ENCODE measurements at regions of chr3 and their contacts with region 1.

Region 1: DNA sequence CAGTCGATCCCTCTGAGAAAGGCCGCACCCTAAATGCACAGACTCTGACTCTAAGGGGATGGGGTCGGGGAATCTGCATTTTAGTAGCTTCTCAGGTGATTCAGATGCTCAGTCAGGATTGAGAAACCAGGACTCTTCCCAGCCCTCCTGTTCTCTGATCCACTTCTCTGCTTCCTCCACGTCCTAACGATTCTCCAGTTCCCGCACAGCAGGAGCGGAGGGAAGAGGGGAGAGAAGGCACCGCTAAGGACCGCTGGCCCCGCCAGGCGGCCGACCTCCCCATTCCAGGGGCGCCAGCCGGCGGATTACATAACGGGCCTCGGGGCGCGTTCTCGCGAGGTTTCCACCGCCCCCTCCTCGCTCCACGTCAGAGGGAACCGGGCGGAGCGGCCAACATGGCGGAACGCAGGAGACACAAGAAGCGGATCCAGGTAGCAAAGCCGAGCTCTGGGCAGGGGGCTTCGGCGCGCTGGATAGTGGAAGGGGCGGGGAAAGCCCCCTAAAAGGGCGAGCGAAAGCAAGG is at the start of gene SEC62:
- DNase-seq: peak; percentile 97
- ATAC-seq: peak; percentile 88
- H3K4me3 ChIP-seq: peak within 1 kb of the TSS; percentile 59 to 88 (median 85)
- H3K4me3 Mint-ChIP-seq: peak within 1 kb of the TSS; percentile 90
- H3K27ac ChIP-seq: peak within 1 kb of the TSS; percentile 98 to 99
- H3K27ac Mint-ChIP-seq: peak within 1 kb of the TSS; percentile 95
- H3K4me1 ChIP-seq: peaks cover 45 to 74% of the 10 kb centered on the region in 2 donors
- H3K4me1 Mint-ChIP-seq: peaks cover 77% of the 10 kb centered on the region
- H3K27me3 ChIP-seq: no peaks in the 10 kb centered on the region
- H3K27me3 Mint-ChIP-seq: no peaks in the 10 kb centered on the region
- CTCF ChIP-seq: peak; percentile 57
- total RNA-seq, gene SEC62: 166 and 176 TPM in 2 replicates

Region 2: DNA sequence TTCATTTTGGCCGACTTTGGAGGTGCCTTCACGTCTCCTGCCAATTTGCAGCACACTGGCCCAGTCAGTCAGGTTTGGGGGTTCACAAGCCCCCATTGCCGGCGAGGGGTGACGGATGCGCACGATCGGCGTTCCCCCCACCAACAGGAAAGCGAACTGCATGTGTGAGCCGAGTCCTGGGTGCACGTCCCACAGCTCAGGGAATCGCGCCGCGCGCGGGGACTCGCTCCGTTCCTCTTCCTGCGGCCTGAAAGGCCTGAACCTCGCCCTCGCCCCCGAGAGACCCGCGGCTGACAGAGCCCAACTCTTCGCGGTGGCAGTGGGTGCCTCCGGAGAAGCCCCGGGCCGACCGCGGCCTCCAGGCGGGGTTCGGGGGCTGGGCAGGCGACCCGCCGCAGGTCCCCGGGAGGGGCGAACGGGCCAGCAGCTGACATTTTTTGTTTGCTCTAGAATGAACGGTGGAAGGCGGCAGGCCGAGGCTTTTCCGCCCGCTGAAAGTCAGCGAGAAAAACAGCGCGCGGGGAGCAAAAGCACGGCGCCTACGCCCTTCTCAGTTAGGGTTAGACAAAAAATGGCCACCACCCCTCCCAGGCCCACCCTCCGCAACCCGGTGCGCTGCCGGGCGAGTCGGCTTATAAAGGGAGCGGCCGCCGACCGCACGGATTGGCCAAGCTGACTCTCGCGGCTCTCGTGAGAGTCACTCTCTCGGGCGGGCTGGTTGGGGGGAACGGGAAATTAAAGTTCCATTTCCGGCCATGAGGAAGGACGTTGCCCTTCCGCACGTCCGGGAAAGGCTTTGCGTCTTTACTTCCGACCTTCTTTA is 201.8 kb before region 1 on chr3 and contains the start of gene TERC:
- CTCF ChIA-PET with region 1: interaction called, 6 read pairs
- POLR2A ChIA-PET with region 1: interaction called, 10 read pairs
- intact Hi-C with region 1: loop called (anchors 2 kb)
- DNase-seq: peak; percentile 95
- ATAC-seq: peak; percentile 82
- H3K4me3 ChIP-seq: peak within 1 kb of the TSS; percentile 70 to 100 (median 87)
- H3K4me3 Mint-ChIP-seq: peak within 1 kb of the TSS; percentile 100
- H3K27ac ChIP-seq: peak within 1 kb of the TSS; percentile 95 to 98
- H3K27ac Mint-ChIP-seq: peak within 1 kb of the TSS; percentile 100
- H3K4me1 ChIP-seq: peaks cover 11 to 17% of the 10 kb centered on the region in 2 donors
- H3K4me1 Mint-ChIP-seq: peaks cover 24% of the 10 kb centered on the region
- H3K27me3 ChIP-seq: no peaks in the 10 kb centered on the region
- H3K27me3 Mint-ChIP-seq: no peaks in the 10 kb centered on the region
- CTCF ChIP-seq: no peak
- total RNA-seq, gene TERC: 10.6 and 12.5 TPM in 2 replicates

Region 3: DNA sequence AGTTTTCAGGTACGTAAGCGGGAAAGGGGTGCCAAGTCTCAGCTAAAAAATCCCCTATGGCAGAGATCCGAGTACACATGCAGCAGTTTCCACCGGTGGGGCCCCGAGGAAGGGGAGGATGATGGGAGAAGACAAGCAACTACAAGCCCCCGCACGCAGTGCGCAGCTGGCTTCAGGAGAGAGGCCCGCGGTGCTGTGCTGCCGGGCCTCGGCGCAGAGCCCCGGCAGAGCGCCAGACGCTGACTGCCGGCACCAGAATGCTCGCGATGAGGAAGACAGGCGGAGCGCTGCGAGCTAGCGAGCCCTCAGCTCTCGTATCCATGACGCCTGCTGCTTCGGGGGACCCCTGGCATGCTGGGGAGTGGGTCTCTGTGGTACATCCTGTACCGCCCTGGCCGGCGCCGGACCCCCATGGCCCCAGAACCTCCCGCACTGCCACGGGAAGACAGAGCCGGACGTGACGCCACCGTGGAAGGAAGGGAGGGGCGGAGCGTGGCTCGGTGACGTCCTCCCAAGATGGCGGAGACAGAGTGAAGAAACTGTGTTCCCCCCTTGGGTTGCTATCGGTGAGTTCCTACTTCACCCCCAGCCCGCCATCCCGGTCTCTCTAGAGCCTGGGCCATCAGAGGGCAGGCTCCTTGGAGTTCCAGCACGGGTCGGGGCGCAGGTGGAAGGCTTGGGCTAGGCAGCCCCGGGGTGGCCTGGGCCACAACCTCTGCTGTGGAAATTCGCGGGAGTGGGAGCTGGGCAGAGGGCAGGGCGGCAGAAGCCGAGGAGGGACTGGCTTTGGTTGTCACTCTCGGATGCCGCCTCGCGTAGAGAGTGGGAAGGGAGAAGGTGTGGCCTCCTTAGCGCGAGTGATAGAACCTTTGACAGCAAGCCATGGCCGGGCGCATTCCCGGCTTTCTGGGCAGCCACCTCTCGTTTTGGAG is 193.3 kb before region 1 on chr3 and contains the start of gene MYNN:
- CTCF ChIA-PET with region 1: interaction called, 5 read pairs
- POLR2A ChIA-PET with region 1: interaction called, 15 read pairs
- intact Hi-C with region 1: loop called (anchors 2 kb)
- DNase-seq: peak; percentile 96
- ATAC-seq: peak; percentile 78
- H3K4me3 ChIP-seq: peak within 1 kb of the TSS; percentile 89 to 97 (median 91)
- H3K4me3 Mint-ChIP-seq: peak within 1 kb of the TSS; percentile 100
- H3K27ac ChIP-seq: peak within 1 kb of the TSS; percentile 97
- H3K27ac Mint-ChIP-seq: peak within 1 kb of the TSS; percentile 99
- H3K4me1 ChIP-seq: peaks cover 16 to 19% of the 10 kb centered on the region in 2 donors
- H3K4me1 Mint-ChIP-seq: peaks cover 50% of the 10 kb centered on the region
- H3K27me3 ChIP-seq: no peaks in the 10 kb centered on the region
- H3K27me3 Mint-ChIP-seq: no peaks in the 10 kb centered on the region
- CTCF ChIP-seq: no peak
- total RNA-seq, gene MYNN: 24.0 and 25.5 TPM in 2 replicates

Region 4: DNA sequence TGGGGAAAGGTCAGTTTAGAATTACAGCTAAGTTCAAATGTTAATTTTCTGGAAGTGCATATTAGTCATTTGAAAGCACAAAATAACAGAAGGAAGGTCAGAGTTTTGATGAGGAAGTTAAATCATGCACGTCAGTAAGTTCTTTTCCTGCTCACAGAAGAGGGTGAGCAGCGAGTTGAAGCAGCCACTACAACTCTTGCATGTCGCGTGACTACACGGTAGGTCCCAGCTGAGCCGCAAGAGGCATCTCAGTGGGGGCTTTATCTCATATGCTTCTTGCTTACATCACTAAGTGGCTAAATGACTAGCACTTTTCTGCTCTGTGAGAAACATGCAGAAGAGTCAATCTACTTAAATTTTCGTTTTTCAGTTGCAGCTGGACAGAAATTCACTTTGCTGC is 21.2 kb before region 1 on chr3:
- CTCF ChIA-PET with region 1: interaction called, 103 read pairs
- POLR2A ChIA-PET with region 1: interaction called, 22 read pairs
- intact Hi-C with region 1: loop called (anchors 1 kb)
- DNase-seq: peak; percentile 93
- ATAC-seq: peak; percentile 91
- H3K4me3 ChIP-seq: peak overlapping the region in 3 of 5 experiments; percentile 13 to 38 (median 15)
- H3K4me3 Mint-ChIP-seq: peak overlapping the region; percentile 79
- H3K27ac ChIP-seq: peak overlapping the region; percentile 79 to 81
- H3K27ac Mint-ChIP-seq: peak overlapping the region; percentile 91
- H3K4me1 ChIP-seq: peaks cover 82 to 88% of the 10 kb centered on the region in 2 donors
- H3K4me1 Mint-ChIP-seq: peaks cover 87% of the 10 kb centered on the region
- H3K27me3 ChIP-seq: no peaks in the 10 kb centered on the region
- H3K27me3 Mint-ChIP-seq: no peaks in the 10 kb centered on the region
- CTCF ChIP-seq: peak; percentile 11

Region 5: DNA sequence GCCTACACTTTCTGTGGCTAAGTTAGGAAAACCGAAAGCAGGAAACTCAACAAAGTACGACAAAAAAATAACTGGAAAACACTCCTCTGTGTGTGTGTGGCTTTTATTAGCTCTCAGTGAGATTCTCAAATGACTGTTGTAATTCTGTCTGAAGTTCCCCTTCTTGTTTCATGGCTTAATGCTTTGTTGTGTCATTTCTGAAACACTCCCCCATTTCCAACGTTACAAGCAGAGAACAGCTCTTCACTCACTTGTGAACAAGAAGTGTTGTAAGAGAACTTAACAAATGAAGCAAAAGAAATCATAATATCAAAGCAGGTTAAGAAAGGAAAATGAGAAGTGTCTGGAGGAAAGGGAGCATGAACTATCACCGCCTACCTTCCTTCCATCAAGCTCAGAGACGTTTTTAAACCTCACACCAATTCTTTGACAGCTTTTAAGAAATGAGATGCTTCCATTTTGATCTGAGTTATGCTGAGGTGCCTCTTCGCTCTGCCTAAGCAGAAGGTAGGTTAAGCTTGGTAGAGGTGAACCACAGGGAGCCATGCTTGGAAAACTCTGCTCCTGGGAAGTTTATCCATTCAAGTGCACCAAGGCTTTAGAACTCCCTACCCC is 12.2 kb before region 1 on chr3:
- CTCF ChIA-PET with region 1: interaction called, 103 read pairs
- POLR2A ChIA-PET with region 1: interaction called, 20 read pairs
- intact Hi-C with region 1: loop called (anchors 1 kb)
- DNase-seq: peak; percentile 66
- ATAC-seq: peak; percentile 83
- H3K4me3 ChIP-seq: peak overlapping the region in 4 of 5 experiments; percentile 19 to 36 (median 27)
- H3K4me3 Mint-ChIP-seq: peak overlapping the region; percentile 71
- H3K27ac ChIP-seq: peak overlapping the region; percentile 71 to 89
- H3K27ac Mint-ChIP-seq: peak overlapping the region; percentile 93
- H3K4me1 ChIP-seq: peaks cover 38 to 45% of the 10 kb centered on the region in 2 donors
- H3K4me1 Mint-ChIP-seq: peaks cover 56% of the 10 kb centered on the region
- H3K27me3 ChIP-seq: no peaks in the 10 kb centered on the region
- H3K27me3 Mint-ChIP-seq: no peaks in the 10 kb centered on the region
- CTCF ChIP-seq: no peak

Region 6: DNA sequence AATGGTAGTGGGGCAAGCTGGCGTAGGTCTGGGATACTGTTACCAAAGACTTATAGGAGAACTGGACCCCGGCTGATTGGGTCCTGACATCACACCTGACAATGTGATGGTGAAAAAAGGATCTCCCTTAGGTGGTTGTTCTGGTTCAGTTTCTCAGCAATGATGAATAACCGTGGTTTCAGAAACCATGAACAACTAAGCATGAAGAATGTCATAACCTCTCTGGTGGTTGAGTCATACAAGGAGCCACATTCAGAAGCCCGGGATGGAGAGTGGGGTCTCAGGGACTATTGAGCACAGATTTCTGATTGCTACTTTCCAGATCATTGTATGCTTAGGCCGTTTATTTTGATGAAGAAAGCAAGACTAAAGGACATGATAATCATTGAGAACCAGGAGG is 88.7 kb after region 1 on chr3:
- CTCF ChIA-PET with region 1: interaction called, 3 read pairs
- POLR2A ChIA-PET with region 1: no interaction called
- intact Hi-C with region 1: loop called (anchors 5 kb)
- DNase-seq: no peak
- ATAC-seq: peak; percentile 37
- H3K4me3 ChIP-seq: peak overlapping the region in 2 of 5 experiments; percentile 18 to 21
- H3K4me3 Mint-ChIP-seq: peak overlapping the region; percentile 82
- H3K27ac ChIP-seq: no peak overlapping the region
- H3K27ac Mint-ChIP-seq: peak overlapping the region; percentile 67
- H3K4me1 ChIP-seq: peaks cover 23 to 25% of the 10 kb centered on the region in 2 donors
- H3K4me1 Mint-ChIP-seq: peaks cover 41% of the 10 kb centered on the region
- H3K27me3 ChIP-seq: no peaks in the 10 kb centered on the region
- H3K27me3 Mint-ChIP-seq: no peaks in the 10 kb centered on the region
- CTCF ChIP-seq: no peak

Region 7: DNA sequence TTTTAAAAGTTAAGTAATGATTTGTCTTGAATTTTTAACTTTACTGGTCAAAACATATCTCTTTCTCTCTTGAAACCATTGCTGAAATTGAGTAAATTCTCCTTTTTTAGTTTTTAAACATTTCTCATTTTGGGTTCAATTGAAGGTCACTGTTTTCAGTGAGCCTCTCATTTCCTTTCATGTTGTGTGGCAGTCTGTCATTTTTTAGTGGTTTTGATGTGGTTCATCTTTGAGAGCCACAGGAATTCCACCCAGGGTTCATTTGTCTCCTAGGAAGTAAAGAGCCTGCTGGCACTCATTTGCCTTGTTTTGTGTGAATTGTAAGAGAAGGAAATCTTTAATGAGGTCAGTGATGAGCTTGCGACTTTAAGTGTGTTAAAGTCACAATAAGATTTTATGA is 462.6 kb after region 1 on chr3:
- CTCF ChIA-PET with region 1: no interaction called
- POLR2A ChIA-PET with region 1: no interaction called
- intact Hi-C with region 1: no loop called
- DNase-seq: no peak
- ATAC-seq: no peak
- H3K4me3 ChIP-seq: no peak overlapping the region
- H3K4me3 Mint-ChIP-seq: no peak overlapping the region
- H3K27ac ChIP-seq: no peak overlapping the region
- H3K27ac Mint-ChIP-seq: no peak overlapping the region
- H3K4me1 ChIP-seq: no peaks in the 10 kb centered on the region
- H3K4me1 Mint-ChIP-seq: no peaks in the 10 kb centered on the region
- H3K27me3 ChIP-seq: no peaks in the 10 kb centered on the region
- H3K27me3 Mint-ChIP-seq: peaks cover 7% of the 10 kb centered on the region
- CTCF ChIP-seq: no peak

Measured in B cell (primary cell).